ENCODE measurements at regions of chr12 and their contacts with region 1.

Region 1: GRCh38 chr12:110100315-110100970 is 23.7 kb upstream of the IFT81 start:
- DNase-seq: peak; percentile 79
- ATAC-seq: peak; percentile 65
- H3K4me3 Mint-ChIP-seq: no peak overlapping the region
- H3K27ac Mint-ChIP-seq: no peak overlapping the region
- H3K4me1 Mint-ChIP-seq: peaks cover 6% of the 10 kb centered on the region
- H3K27me3 Mint-ChIP-seq: no peaks in the 10 kb centered on the region; the same call in 1 of the 2 replicates
- CTCF ChIP-seq: peak; percentile 79

Region 2: GRCh38 chr12:109625131-109625559 is 475.3 kb before region 1 on chr12:
- CTCF ChIA-PET with region 1: no interaction called
- POLR2A ChIA-PET with region 1: no interaction called
- DNase-seq: no peak
- ATAC-seq: no peak
- H3K4me3 Mint-ChIP-seq: no peak overlapping the region
- H3K27ac Mint-ChIP-seq: peak overlapping the region; percentile 85
- H3K4me1 Mint-ChIP-seq: peaks cover 22% of the 10 kb centered on the region
- H3K27me3 Mint-ChIP-seq: no peaks in the 10 kb centered on the region
- CTCF ChIP-seq: no peak

Region 3: DNA sequence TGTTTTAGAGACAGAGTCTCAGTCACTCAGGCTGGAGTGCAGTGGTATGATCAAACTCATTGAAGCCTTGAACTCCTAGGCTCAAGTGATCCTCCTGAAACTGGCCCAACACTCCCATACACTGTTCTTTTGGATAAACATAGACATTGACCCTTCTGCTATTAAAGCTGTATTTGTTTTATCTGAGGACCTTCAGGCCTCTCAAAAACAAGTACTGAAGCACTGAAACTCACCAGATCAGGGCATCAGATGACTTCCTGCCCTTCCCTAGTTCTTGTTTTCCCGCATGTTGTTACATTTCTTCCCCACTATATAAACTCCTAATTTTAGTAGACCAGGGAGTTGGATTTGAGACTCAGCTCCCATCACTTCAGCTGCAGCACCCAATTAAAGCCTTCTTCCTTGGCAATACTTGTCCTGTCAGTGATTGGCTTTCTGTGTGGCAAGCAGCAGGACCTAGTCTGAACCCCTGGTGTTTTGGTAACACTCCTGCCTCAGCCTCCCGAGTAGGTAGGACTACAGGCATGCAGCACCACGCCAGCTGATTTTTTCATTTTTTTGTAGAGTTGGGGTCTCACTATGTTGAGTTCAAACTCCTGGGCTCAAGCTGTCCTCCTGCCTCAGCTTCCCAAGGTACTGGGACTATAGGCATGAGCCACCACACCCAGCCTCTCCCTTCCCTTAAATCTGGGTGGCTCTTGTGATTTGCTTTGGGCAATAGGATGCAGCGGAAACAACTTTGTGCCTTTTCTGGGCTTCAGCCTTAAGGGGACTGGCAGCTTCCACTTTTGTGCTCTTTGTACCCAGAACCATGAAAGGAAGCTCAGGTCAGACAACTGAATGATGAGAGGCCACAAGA is 11.3 kb after region 1 on chr12:
- CTCF ChIA-PET with region 1: interaction called, 10 read pairs
- POLR2A ChIA-PET with region 1: no interaction called
- DNase-seq: no peak
- ATAC-seq: no peak
- H3K4me3 Mint-ChIP-seq: no peak overlapping the region
- H3K27ac Mint-ChIP-seq: no peak overlapping the region
- H3K4me1 Mint-ChIP-seq: peaks cover 9% of the 10 kb centered on the region
- H3K27me3 Mint-ChIP-seq: no peaks in the 10 kb centered on the region
- CTCF ChIP-seq: no peak

Region 4: DNA sequence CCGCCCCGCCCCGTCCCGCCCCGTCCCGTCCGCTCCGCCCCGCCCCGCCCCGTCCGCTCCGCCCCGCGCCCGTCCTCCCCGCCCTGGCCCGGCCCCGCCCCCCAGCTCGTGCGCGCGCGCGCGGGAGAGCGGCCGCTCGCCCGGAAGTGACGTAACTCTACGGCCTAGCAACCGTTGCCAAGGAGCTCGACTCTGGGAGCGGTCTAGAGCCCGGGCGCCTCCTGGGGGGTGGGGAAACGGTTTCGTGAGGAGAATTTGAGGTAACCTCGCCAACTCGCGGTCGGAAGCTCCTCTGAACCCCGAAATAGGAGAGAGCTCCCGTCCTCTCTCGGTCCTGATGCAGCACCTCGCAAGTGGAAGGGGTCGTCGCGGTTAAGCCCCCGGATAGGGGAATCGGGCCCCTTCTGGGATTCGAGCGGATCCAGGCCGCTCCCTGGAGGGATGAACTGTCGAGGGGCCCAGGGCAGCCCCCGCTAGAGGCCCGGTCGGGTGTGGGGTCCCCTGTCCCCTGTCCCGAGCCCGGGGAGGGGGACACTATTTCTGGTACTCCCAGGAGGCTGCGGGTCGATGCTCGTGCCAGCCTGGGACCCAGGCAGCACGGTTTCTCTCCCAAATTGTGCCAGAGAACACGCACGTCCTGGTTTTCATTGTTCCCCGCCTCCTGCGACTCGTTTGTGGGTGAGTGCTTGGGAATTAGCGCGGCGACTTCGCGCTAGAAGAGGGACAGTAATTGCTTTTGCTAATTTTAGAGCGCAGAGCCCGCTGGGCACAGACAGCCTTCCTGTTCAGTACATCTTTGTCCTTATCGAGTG is 23.9 kb after region 1 on chr12 and contains the start of gene IFT81:
- CTCF ChIA-PET with region 1: interaction called, 14 read pairs
- POLR2A ChIA-PET with region 1: no interaction called
- DNase-seq: peak; percentile 94
- ATAC-seq: peak; percentile 89
- H3K4me3 Mint-ChIP-seq: peak within 1 kb of the TSS; percentile 90
- H3K27ac Mint-ChIP-seq: peak within 1 kb of the TSS; percentile 60; the same call in 1 of the 2 replicates
- H3K4me1 Mint-ChIP-seq: peaks cover 24% of the 10 kb centered on the region
- H3K27me3 Mint-ChIP-seq: peaks cover 36% of the 10 kb centered on the region
- CTCF ChIP-seq: no peak
- total RNA-seq, gene IFT81: 9.3 to 10.5 TPM (median 10.4 TPM) in 3 replicates

Region 5: GRCh38 chr12:110280779-110281548 is 180.5 kb after region 1 on chr12 and contains the start of gene ATP2A2:
- CTCF ChIA-PET with region 1: interaction called, 17 read pairs
- POLR2A ChIA-PET with region 1: no interaction called
- DNase-seq: peak; percentile 80
- ATAC-seq: peak; percentile 80
- H3K4me3 Mint-ChIP-seq: peak within 1 kb of the TSS; percentile 89
- H3K27ac Mint-ChIP-seq: peak within 1 kb of the TSS; percentile 73
- H3K4me1 Mint-ChIP-seq: peaks cover 51% of the 10 kb centered on the region
- H3K27me3 Mint-ChIP-seq: peaks cover 13% of the 10 kb centered on the region
- CTCF ChIP-seq: no peak
- total RNA-seq, gene ATP2A2: 216 to 239 TPM (median 216 TPM) in 3 replicates